ENCODE measurements at regions of chr11 and their contacts with region 1.

Region 1: GRCh38 chr11:74492974-74493790 is at the start of gene LIPT2:
- DNase-seq: peak; percentile 98
- H3K4me3 ChIP-seq: peak within 1 kb of the TSS; percentile 80 to 88 (median 82)
- H3K27ac ChIP-seq: peak within 1 kb of the TSS; percentile 82
- H3K4me1 ChIP-seq: peaks cover 16% of the 10 kb centered on the region
- H3K27me3 ChIP-seq: no peaks in the 10 kb centered on the region
- CTCF ChIP-seq: no peak
- total RNA-seq, gene LIPT2: 4.3 to 5.0 TPM

Region 2: DNA sequence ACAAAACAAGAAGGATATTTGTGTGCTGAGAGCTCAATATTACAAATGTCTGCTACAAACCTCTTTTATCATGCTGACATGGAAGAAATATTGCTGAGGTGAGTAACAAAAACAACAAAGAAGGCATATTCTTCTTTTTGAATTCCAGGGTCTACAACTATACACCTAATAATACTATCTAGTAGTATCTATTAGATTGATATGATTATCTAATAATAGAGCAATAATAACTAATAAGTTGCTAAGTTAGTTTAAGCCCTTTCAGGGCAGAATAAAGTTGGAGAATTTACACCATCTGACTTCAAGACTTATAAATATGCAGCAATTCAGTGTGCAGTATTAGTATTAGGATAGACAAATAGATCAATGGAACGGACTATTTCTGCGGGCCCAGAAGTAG is 83.5 kb before region 1 on chr11:
- CTCF ChIA-PET with region 1: no interaction called
- dilution Hi-C with region 1: loop called (anchors 5 kb)
- in situ Hi-C with region 1: no loop called
- intact Hi-C with region 1: no loop called
- DNase-seq: no peak
- H3K4me3 ChIP-seq: no peak overlapping the region
- H3K27ac ChIP-seq: no peak overlapping the region
- H3K4me1 ChIP-seq: peaks cover 8% of the 10 kb centered on the region
- H3K27me3 ChIP-seq: no peaks in the 10 kb centered on the region
- CTCF ChIP-seq: no peak

Region 3: DNA sequence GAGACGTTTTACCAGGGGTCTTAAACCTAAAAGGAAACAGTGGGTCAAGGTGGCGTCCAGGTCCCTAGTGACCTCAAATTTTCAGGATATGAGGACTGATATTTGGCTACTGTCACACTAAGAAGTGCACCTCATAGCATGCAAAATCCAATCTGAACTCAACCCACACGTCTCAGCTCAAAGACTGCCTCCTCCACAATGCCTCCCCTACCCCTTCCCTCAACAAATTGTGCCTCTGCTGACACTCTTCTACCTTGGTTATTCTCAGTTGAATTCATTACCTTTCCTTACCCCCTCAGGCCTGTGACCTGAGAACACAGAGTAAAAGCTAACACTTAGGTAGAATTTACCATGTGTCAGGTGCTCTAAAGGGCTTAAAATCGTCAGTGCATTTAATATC is 12.7 kb after region 1 on chr11:
- CTCF ChIA-PET with region 1: no interaction called
- dilution Hi-C with region 1: no loop called
- in situ Hi-C with region 1: no loop called
- intact Hi-C with region 1: loop called (anchors 1 kb)
- DNase-seq: no peak
- H3K4me3 ChIP-seq: no peak overlapping the region
- H3K27ac ChIP-seq: peak overlapping the region; percentile 85
- H3K4me1 ChIP-seq: peaks cover 11% of the 10 kb centered on the region
- H3K27me3 ChIP-seq: no peaks in the 10 kb centered on the region
- CTCF ChIP-seq: no peak

Region 4: GRCh38 chr11:74559110-74559933 is 66.1 kb after region 1 on chr11:
- CTCF ChIA-PET with region 1: no interaction called
- dilution Hi-C with region 1: loop called (anchors 5 kb)
- in situ Hi-C with region 1: no loop called
- intact Hi-C with region 1: no loop called
- DNase-seq: no peak
- H3K4me3 ChIP-seq: no peak overlapping the region
- H3K27ac ChIP-seq: no peak overlapping the region
- H3K4me1 ChIP-seq: no peaks in the 10 kb centered on the region
- H3K27me3 ChIP-seq: peaks cover 5% of the 10 kb centered on the region
- CTCF ChIP-seq: no peak